ENCODE measurements at regions of chr12 and their contacts with region 1.

Region 1: GRCh38 chr12:45122768-45123380 is 72.0 kb upstream of the DBX2 start:
- DNase-seq: peak; percentile 21
- ATAC-seq: peak; percentile 42; the same call in 1 of the 2 replicates
- H3K4me3 ChIP-seq: no peak overlapping the region
- H3K27ac ChIP-seq: no peak overlapping the region
- H3K4me1 ChIP-seq: no peaks in the 10 kb centered on the region
- H3K27me3 ChIP-seq: peaks cover 1% of the 10 kb centered on the region; the same call in 1 of the 2 replicates
- CTCF ChIP-seq: peak; percentile 34
- POLR2A ChIP-seq: no peak
- RAD21 ChIP-seq: peak; percentile 22; the same call in 1 of the 2 replicates

Region 2: DNA sequence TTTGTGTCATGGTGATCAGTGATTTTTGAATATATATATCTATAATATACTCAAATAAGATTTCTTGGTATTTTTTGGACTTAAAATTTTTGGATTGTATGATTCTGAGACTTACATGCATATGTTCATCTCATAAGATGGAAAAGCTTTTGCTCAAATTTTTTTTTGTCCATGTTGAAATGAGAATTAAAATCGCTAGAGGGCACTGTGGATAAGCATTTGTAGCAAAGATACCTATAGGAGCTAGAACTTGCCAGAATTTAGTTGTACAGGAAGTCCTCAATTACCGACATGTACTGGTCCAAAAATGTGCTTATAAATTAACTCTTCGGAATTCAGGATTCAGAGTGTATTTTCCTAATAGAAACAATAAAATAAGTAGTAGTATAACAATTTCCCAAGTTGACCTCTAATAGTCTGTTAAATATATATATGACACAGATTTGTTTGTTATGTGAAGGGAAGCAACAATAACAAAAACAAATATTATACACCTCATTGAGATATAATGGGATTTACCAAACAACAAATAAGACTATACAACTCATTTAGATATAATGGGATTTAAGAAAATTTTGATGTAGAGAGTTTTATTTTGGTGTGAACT is 1107.4 kb before region 1 on chr12:
- CTCF ChIA-PET with region 1: no interaction called
- POLR2A ChIA-PET with region 1: no interaction called
- dilution Hi-C with region 1: no loop called
- in situ Hi-C with region 1: no loop called
- intact Hi-C with region 1: loop called (anchors 10 kb)
- DNase-seq: peak; percentile 66
- ATAC-seq: peak; percentile 66
- H3K4me3 ChIP-seq: no peak overlapping the region
- H3K27ac ChIP-seq: no peak overlapping the region
- H3K4me1 ChIP-seq: no peaks in the 10 kb centered on the region
- H3K27me3 ChIP-seq: no peaks in the 10 kb centered on the region
- CTCF ChIP-seq: peak; percentile 66
- POLR2A ChIP-seq: no peak
- RAD21 ChIP-seq: peak; percentile 76

Region 3: GRCh38 chr12:44972746-44973421 is 150.0 kb before region 1 on chr12:
- CTCF ChIA-PET with region 1: no interaction called
- POLR2A ChIA-PET with region 1: no interaction called
- dilution Hi-C with region 1: no loop called
- in situ Hi-C with region 1: no loop called
- intact Hi-C with region 1: loop called (anchors 5 kb)
- DNase-seq: no peak
- ATAC-seq: no peak
- H3K4me3 ChIP-seq: no peak overlapping the region
- H3K27ac ChIP-seq: no peak overlapping the region
- H3K4me1 ChIP-seq: no peaks in the 10 kb centered on the region
- H3K27me3 ChIP-seq: no peaks in the 10 kb centered on the region
- CTCF ChIP-seq: no peak; the same call in 1 of the 2 replicates
- POLR2A ChIP-seq: no peak
- RAD21 ChIP-seq: no peak

Measured in IMR-90 (cell line).